ENCODE measurements at regions of chr3 and their contacts with region 1.

Region 1: DNA sequence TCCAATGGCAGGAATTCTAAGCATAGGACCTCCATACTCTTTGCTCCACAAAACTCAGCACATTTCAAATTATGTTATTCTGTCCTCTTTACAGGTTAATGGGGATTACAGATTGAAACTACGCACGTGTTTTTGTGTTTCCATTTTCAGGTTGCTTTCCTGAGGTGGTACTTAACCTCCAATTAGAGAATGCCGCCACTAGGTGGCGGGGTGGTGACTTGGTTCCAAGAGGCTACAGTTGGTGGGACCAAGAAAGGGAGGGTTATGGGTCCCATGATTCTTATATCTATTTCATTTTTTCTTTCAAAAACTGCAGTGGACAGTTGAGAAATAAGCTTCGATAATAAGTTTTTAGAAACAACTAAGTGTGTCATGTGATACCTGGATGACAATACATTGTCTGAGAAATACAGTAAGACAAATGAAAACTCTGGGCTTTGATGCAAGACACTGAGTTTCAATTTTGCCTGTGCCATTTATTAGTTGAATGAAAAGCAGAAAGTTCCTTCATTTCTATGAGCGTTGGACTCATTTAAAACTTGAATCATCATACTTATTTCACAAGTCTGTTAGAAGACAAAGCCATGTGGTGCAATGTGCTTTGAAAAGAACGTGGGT is 539.0 kb downstream of the FGF12 start:
- DNase-seq: peak; percentile 62 to 67 (median 64)
- ATAC-seq: peak; percentile 84 to 89 (median 86)
- H3K4me3 ChIP-seq: no peak overlapping the region
- H3K27ac ChIP-seq: no peak overlapping the region
- H3K4me1 ChIP-seq: no peaks in the 10 kb centered on the region
- H3K27me3 ChIP-seq: no peaks in the 10 kb centered on the region
- CTCF ChIP-seq: peak; percentile 59 to 81 (median 73)
- POLR2A ChIP-seq: no peak

Region 2: GRCh38 chr3:192063570-192063969 is 124.8 kb before region 1 on chr3:
- intact Hi-C with region 1: no loop called
- DNase-seq: peak in 1 of 3 donors; percentile 22
- ATAC-seq: peak; percentile 34 to 61 (median 52)
- H3K4me3 ChIP-seq: no peak overlapping the region
- H3K27ac ChIP-seq: no peak overlapping the region
- H3K4me1 ChIP-seq: no peaks in the 10 kb centered on the region
- H3K27me3 ChIP-seq: no peaks in the 10 kb centered on the region
- CTCF ChIP-seq: no peak
- POLR2A ChIP-seq: no peak

Region 3: GRCh38 chr3:192433704-192434103 is 245.4 kb after region 1 on chr3:
- intact Hi-C with region 1: no loop called
- DNase-seq: peak; percentile 37 to 58 (median 54)
- ATAC-seq: peak; percentile 89 to 98 (median 94)
- H3K4me3 ChIP-seq: peak overlapping the region in 2 of 3 donors; percentile 14 to 20
- H3K27ac ChIP-seq: peak overlapping the region; percentile 51 to 66 (median 55)
- H3K4me1 ChIP-seq: peaks cover 0 to 5% (median 0%) of the 10 kb centered on the region in 4 donors
- H3K27me3 ChIP-seq: no peaks in the 10 kb centered on the region
- CTCF ChIP-seq: peak in 1 of 4 donors; percentile 10
- POLR2A ChIP-seq: no peak

Region 4: GRCh38 chr3:192444096-192444790 is 255.9 kb after region 1 on chr3:
- intact Hi-C with region 1: loop called in 1 of 2 experiments (anchors 10 kb)
- DNase-seq: peak; percentile 60 to 71 (median 68)
- ATAC-seq: peak; percentile 95 to 97 (median 96)
- H3K4me3 ChIP-seq: no peak overlapping the region
- H3K27ac ChIP-seq: no peak overlapping the region
- H3K4me1 ChIP-seq: no peaks in the 10 kb centered on the region
- H3K27me3 ChIP-seq: peaks cover 5 to 14% of the 10 kb centered on the region in 2 donors
- CTCF ChIP-seq: peak; percentile 94 to 99 (median 98)
- POLR2A ChIP-seq: no peak